Naive thymus-derived CD4-positive, alpha-beta T cell (primary cell): ENCODE measurements at regions of chr19 and their contacts with region 1.

Region 1: DNA sequence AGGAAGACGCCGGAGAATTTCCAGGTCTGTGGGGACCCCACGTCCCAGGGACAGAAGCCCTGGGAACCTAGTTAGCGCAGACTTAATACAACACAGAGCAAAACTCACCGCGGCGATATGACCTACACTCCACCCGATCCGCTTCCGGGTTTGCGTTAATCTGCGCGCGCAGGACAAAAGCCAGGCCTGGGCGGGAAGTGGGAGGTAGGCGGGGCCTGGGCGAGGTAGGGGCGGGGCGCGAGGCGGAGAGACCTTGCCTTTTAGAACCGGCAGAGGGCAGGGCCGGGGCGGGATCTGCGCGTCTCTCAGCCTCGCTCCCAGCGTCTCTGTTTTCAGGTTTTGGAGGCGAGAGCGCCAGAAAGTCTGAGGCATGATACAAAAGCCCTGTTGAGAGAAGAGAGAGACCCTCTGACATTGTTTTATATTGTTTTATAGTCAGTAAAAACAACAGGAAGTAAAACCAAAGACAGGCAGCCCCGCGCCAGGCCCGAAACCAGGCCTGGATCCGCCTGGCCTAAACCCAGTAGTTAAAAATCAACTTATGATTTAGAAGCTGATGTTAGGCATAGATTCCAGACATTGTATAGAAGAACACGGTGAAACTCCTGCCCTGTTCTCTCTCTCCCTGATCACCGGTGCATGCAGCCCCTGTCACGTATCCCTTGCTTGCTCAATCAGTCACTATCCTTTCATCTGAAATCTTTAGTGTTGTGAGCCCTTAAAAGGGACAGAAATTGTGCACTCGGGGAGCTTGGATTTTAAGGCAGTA is at the start of gene ZNF611:
- DNase-seq: peak; percentile 97 to 100 (median 98)
- ATAC-seq: peak; percentile 98
- H3K4me3 ChIP-seq: peak within 1 kb of the TSS; percentile 99
- H3K4me3 Mint-ChIP-seq: peak within 1 kb of the TSS; percentile 85 to 96 (median 93)
- H3K27ac ChIP-seq: peak within 1 kb of the TSS; percentile 95
- H3K27ac Mint-ChIP-seq: peak within 1 kb of the TSS; percentile 92 to 98 (median 95)
- H3K4me1 ChIP-seq: peaks cover 0 to 8% of the 10 kb centered on the region in 2 donors
- H3K4me1 Mint-ChIP-seq: peaks cover 14 to 32% (median 24%) of the 10 kb centered on the region in 7 donors
- H3K27me3 ChIP-seq: no peaks in the 10 kb centered on the region
- H3K27me3 Mint-ChIP-seq: no peaks in the 10 kb centered on the region
- total RNA-seq, gene ZNF611: 23.4 to 56.0 (median 36.8) TPM

Region 2: GRCh38 chr19:52095172-52096014 is 639.7 kb before region 1 on chr19 and contains the start of gene ZNF841:
- CTCF ChIA-PET with region 1: no interaction called
- POLR2A ChIA-PET with region 1: no interaction called
- intact Hi-C with region 1: loop called in 1 of 2 experiments (anchors 1 kb)
- DNase-seq: peak; percentile 64 to 84 (median 75)
- ATAC-seq: peak; percentile 98
- H3K4me3 ChIP-seq: peak within 1 kb of the TSS; percentile 86
- H3K4me3 Mint-ChIP-seq: peak within 1 kb of the TSS; percentile 87 to 99 (median 96)
- H3K27ac ChIP-seq: peak within 1 kb of the TSS; percentile 81
- H3K27ac Mint-ChIP-seq: peak within 1 kb of the TSS; percentile 62 to 99 (median 94)
- H3K4me1 ChIP-seq: peaks cover 0 to 9% of the 10 kb centered on the region in 2 donors
- H3K4me1 Mint-ChIP-seq: peaks cover 24 to 47% (median 39%) of the 10 kb centered on the region in 7 donors
- H3K27me3 ChIP-seq: no peaks in the 10 kb centered on the region
- H3K27me3 Mint-ChIP-seq: no peaks in the 10 kb centered on the region
- total RNA-seq, gene ZNF841: 22.6 to 43.5 (median 27.5) TPM

Region 3: DNA sequence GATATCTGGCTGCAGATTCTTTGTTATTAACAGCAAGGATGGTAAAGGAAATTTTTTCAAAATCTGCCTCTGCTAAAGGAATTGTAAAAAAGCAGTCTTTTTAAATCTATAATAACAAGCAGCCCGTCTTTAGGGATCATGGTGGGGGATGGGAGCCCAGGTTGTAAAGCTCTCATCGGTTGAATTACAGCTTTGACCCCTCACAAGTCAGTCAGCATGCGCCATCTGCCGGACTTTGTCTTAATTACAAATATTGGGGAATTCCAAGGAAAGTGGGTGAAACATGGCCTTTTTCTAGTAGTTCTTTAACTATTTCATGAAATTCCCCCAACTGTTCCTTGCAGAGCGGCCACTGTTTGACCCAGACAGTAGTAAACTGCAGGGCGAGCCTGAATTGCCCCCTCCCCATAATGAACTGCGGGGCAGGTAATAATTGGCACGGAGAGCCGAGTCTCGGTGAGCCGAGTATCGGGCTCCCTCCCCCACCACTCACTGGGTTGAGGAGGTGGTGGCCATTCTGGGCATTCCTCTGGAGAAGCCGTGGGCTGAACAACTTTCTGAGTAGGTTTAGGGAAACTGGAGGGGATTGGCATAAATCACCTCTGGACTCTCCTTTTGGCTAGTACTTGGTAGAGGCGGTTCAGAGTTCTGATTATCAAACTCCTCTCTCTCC is 270.1 kb before region 1 on chr19:
- CTCF ChIA-PET with region 1: no interaction called
- POLR2A ChIA-PET with region 1: no interaction called
- intact Hi-C with region 1: no loop called
- DNase-seq: no peak
- ATAC-seq: no peak
- H3K4me3 ChIP-seq: no peak overlapping the region
- H3K4me3 Mint-ChIP-seq: no peak overlapping the region
- H3K27ac ChIP-seq: no peak overlapping the region
- H3K27ac Mint-ChIP-seq: no peak overlapping the region
- H3K4me1 ChIP-seq: no peaks in the 10 kb centered on the region
- H3K4me1 Mint-ChIP-seq: peaks cover 0 to 1% (median 0%) of the 10 kb centered on the region in 7 donors
- H3K27me3 ChIP-seq: no peaks in the 10 kb centered on the region
- H3K27me3 Mint-ChIP-seq: no peaks in the 10 kb centered on the region

Region 4: GRCh38 chr19:52527134-52527955 is 207.7 kb before region 1 on chr19 and contains the start of gene ZNF808:
- CTCF ChIA-PET with region 1: no interaction called
- POLR2A ChIA-PET with region 1: no interaction called
- intact Hi-C with region 1: loop called (anchors 1 kb)
- DNase-seq: peak; percentile 79 to 95 (median 90)
- ATAC-seq: peak; percentile 99
- H3K4me3 ChIP-seq: peak within 1 kb of the TSS; percentile 99
- H3K4me3 Mint-ChIP-seq: peak within 1 kb of the TSS; percentile 91 to 100 (median 98)
- H3K27ac ChIP-seq: peak within 1 kb of the TSS; percentile 91
- H3K27ac Mint-ChIP-seq: peak within 1 kb of the TSS; percentile 84 to 99 (median 98)
- H3K4me1 ChIP-seq: peaks cover 9 to 12% of the 10 kb centered on the region in 2 donors
- H3K4me1 Mint-ChIP-seq: peaks cover 18 to 34% (median 25%) of the 10 kb centered on the region in 7 donors
- H3K27me3 ChIP-seq: no peaks in the 10 kb centered on the region
- H3K27me3 Mint-ChIP-seq: no peaks in the 10 kb centered on the region
- total RNA-seq, gene ZNF808: 17.7 to 52.4 (median 33.7) TPM

Region 5: DNA sequence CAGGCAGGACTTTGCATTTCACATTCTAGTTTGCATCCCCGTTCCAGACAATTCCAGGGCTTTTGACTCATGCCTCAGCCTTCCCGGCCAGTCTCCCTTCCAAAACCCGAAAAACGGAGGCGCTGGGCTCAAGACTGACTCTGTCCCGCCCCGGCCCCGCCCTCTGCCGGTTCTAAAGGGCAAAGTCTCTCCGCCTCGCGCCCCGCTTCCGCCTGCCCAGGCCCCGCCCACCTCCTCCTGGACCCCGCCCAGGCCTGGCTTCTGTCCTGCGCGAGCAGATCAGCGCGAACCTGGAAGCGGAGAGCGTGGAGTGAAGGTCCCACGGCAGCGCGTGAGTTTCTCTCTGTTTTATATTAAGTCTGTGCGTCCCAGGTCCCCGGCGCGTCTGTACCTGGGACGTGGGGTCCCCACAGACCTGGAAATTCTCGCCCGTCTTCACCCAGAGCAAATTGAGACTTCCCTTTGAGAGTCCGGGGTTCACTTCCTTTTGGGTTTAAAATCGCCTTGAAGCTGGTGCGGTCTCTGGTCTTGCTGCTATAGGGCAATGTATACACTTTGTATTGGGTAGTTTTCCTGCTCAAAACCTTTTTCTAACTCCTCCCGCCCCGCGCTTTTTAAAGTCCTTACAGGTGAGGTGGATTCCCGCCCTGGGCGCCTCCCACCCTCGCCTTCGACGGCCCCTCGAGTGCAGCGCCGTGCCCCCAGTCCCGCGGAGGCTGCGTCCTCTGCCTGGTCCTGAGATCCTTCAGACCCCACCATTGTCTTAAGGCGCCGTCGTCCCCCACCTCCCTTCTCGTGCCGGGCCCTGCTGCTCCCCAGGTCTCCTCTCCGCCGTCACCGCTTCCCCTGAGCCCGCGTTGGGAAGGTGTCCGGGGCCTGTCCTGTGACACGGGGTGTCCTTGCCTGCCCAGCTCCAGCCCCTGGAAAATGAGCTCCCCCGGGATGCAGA is 133.8 kb before region 1 on chr19:
- CTCF ChIA-PET with region 1: no interaction called
- POLR2A ChIA-PET with region 1: interaction called, 3 read pairs
- intact Hi-C with region 1: loop called (anchors 1 to 10 kb)
- DNase-seq: peak; percentile 84 to 94 (median 91)
- ATAC-seq: peak; percentile 100
- H3K4me3 ChIP-seq: peak overlapping the region; percentile 89
- H3K4me3 Mint-ChIP-seq: peak overlapping the region; percentile 86 to 99 (median 92)
- H3K27ac ChIP-seq: peak overlapping the region; percentile 81
- H3K27ac Mint-ChIP-seq: peak overlapping the region; percentile 63 to 93 (median 81)
- H3K4me1 ChIP-seq: peaks cover 10 to 12% of the 10 kb centered on the region in 2 donors
- H3K4me1 Mint-ChIP-seq: peaks cover 11 to 43% (median 37%) of the 10 kb centered on the region in 7 donors
- H3K27me3 ChIP-seq: no peaks in the 10 kb centered on the region
- H3K27me3 Mint-ChIP-seq: no peaks in the 10 kb centered on the region

Region 6: GRCh38 chr19:52748336-52748950 is 13.4 kb after region 1 on chr19:
- CTCF ChIA-PET with region 1: interaction called, 3 read pairs
- POLR2A ChIA-PET with region 1: interaction called, 3 read pairs
- intact Hi-C with region 1: loop called in 1 of 2 experiments (anchors 1 kb)
- DNase-seq: peak in 7 of 9 donors; percentile 18 to 43 (median 35)
- ATAC-seq: no peak
- H3K4me3 ChIP-seq: no peak overlapping the region
- H3K4me3 Mint-ChIP-seq: no peak overlapping the region
- H3K27ac ChIP-seq: no peak overlapping the region
- H3K27ac Mint-ChIP-seq: no peak overlapping the region
- H3K4me1 ChIP-seq: no peaks in the 10 kb centered on the region
- H3K4me1 Mint-ChIP-seq: peaks cover 0 to 13% (median 6%) of the 10 kb centered on the region in 7 donors
- H3K27me3 ChIP-seq: no peaks in the 10 kb centered on the region
- H3K27me3 Mint-ChIP-seq: no peaks in the 10 kb centered on the region

Region 7: GRCh38 chr19:52897144-52897935 is 162.3 kb after region 1 on chr19 and contains the start of gene ZNF320:
- CTCF ChIA-PET with region 1: no interaction called
- POLR2A ChIA-PET with region 1: no interaction called
- intact Hi-C with region 1: loop called in 1 of 2 experiments (anchors 1 kb)
- DNase-seq: peak; percentile 78 to 92 (median 89)
- ATAC-seq: peak; percentile 100
- H3K4me3 ChIP-seq: peak within 1 kb of the TSS; percentile 96
- H3K4me3 Mint-ChIP-seq: peak within 1 kb of the TSS; percentile 88 to 96 (median 92)
- H3K27ac ChIP-seq: peak within 1 kb of the TSS; percentile 79
- H3K27ac Mint-ChIP-seq: peak within 1 kb of the TSS; percentile 19 to 94 (median 93)
- H3K4me1 ChIP-seq: peaks cover 4 to 5% of the 10 kb centered on the region in 2 donors
- H3K4me1 Mint-ChIP-seq: peaks cover 5 to 33% (median 17%) of the 10 kb centered on the region in 7 donors
- H3K27me3 ChIP-seq: no peaks in the 10 kb centered on the region
- H3K27me3 Mint-ChIP-seq: no peaks in the 10 kb centered on the region
- total RNA-seq, gene ZNF320: 4.5 to 13.4 (median 11.6) TPM